ENCODE measurements at regions of chr11 and their contacts with region 1.

Region 1: DNA sequence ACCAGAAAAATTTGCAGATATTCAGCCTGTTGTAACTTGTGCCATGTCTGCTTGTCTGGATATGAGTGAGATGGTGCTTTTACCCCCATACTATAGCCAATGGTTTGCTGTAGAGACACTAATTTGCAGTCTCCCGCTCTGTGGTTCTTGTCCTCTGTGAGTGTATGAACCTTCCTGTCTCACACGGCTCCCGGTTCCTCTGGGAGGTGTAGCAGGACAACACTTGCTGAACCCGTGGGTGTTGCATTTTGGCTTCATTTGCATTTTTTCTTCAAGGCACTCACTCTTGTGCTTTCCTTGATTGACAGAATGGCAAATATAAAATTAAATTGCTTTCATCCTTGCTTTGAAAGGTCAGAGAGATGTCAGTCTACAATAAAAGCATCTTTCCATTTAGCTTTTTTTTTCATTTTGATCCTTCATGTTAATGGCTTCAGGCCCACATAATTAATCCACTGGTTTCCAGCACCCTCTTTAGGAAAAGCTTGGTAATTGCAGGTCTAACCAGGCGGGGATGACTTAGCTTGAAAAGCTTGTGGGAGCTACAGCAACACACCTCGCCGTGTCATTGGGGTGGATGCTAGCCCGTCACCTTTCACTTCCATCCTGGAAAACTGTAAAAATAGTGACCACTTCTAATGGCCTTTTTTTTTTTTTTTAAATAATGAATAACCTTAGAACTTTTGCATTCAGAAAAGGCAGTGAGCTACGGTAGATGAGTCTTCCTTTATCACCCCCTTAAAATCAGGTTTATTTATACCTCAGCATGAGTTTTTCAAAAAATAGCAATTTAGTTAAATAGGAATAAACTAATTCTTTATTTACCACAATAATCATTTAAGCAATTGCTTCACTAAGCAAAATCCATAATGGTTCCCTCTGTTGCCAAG is 27.4 kb upstream of the ST14 start:
- DNase-seq: peak; percentile 65
- ATAC-seq: peak; percentile 67
- H3K4me3 Mint-ChIP-seq: no peak overlapping the region
- H3K27ac Mint-ChIP-seq: no peak overlapping the region
- H3K4me1 Mint-ChIP-seq: no peaks in the 10 kb centered on the region
- H3K27me3 Mint-ChIP-seq: no peaks in the 10 kb centered on the region

Region 2: DNA sequence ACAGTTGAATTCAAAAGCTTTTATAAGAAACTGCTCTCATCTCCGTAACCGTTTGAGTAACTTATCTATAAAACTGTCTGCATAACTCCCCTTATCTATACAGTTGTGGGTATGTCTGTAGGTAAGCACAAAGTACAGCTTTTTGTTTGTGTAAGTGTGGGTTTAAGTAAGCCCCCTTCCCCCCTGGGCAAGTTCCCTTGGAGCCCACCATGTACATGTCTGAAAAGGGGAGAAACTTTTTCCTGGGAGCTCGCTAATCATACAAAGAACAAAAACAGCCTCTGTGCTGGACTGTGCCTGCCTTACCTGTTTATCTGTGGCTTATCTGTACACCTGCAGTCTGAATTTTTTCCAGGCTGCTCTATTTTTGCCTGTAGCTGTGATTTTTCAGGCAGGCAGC is 352.9 kb before region 1 on chr11:
- CTCF ChIA-PET with region 1: interaction called, 11 read pairs
- POLR2A ChIA-PET with region 1: no interaction called
- DNase-seq: no peak
- ATAC-seq: no peak
- H3K4me3 Mint-ChIP-seq: no peak overlapping the region
- H3K27ac Mint-ChIP-seq: no peak overlapping the region
- H3K4me1 Mint-ChIP-seq: no peaks in the 10 kb centered on the region
- H3K27me3 Mint-ChIP-seq: peaks cover 12% of the 10 kb centered on the region

Region 3: DNA sequence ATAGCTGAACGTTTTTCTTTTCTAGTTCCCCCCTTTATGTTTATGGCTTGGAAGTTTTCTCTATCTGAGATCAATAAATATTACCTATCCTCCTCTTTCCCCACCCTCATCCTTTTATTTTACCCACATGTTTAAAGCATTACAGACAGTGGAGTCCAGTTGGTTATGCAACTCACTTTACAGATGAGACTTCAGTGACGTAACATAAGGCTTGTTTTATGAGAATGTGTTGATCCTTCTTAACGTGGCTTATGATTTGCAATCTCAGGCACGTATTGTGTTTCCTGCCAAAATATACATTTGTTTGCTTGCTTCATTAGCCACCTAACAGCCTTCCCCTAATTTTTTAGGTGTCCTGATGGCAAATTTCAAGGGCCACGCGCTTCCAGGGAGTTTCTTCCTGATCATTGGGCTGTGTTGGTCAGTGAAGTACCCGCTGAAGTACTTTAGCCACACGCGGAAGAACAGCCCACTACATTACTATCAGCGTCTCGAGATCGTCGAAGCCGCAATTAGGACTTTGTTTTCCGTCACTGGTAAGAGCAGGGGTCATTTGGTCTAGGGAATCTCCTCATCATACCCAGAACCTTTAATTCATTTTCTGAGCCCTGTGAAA is 280.0 kb before region 1 on chr11:
- CTCF ChIA-PET with region 1: no interaction called
- POLR2A ChIA-PET with region 1: no interaction called
- DNase-seq: no peak
- ATAC-seq: no peak
- H3K4me3 Mint-ChIP-seq: no peak overlapping the region
- H3K27ac Mint-ChIP-seq: peak overlapping the region; percentile 1
- H3K4me1 Mint-ChIP-seq: peaks cover 25% of the 10 kb centered on the region
- H3K27me3 Mint-ChIP-seq: peaks cover 2% of the 10 kb centered on the region

Region 4: DNA sequence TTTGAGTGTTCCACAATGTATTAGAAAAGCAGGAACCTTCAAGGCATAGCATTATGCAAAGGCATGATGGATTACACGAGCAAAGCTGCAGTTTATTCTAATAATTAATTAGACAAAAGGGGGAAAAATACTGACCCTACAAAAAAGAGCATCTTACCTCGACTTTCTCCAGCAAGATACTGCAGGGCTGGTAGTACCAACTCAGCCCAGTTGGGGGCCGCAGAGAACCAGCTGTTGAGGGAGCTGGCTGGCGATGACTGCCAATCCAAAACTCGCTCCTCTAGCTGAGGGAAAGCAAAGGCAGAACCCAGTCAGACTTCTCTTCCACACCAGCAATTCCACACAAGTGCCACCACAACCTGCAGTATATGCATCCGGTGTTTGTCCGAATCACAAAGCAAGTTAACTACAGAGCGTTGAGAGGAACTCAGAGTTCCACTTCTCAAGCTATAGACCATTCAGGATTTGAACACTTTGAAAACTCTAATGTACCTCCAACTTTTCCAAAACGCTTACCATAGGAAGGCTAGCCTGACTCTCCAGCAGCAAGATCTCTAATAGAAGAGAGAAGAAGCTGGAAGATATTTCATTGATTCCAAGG is 250.5 kb before region 1 on chr11:
- CTCF ChIA-PET with region 1: interaction called, 36 read pairs
- POLR2A ChIA-PET with region 1: no interaction called
- DNase-seq: peak; percentile 60
- ATAC-seq: peak; percentile 69
- H3K4me3 Mint-ChIP-seq: no peak overlapping the region
- H3K27ac Mint-ChIP-seq: no peak overlapping the region
- H3K4me1 Mint-ChIP-seq: no peaks in the 10 kb centered on the region
- H3K27me3 Mint-ChIP-seq: no peaks in the 10 kb centered on the region

Region 5: DNA sequence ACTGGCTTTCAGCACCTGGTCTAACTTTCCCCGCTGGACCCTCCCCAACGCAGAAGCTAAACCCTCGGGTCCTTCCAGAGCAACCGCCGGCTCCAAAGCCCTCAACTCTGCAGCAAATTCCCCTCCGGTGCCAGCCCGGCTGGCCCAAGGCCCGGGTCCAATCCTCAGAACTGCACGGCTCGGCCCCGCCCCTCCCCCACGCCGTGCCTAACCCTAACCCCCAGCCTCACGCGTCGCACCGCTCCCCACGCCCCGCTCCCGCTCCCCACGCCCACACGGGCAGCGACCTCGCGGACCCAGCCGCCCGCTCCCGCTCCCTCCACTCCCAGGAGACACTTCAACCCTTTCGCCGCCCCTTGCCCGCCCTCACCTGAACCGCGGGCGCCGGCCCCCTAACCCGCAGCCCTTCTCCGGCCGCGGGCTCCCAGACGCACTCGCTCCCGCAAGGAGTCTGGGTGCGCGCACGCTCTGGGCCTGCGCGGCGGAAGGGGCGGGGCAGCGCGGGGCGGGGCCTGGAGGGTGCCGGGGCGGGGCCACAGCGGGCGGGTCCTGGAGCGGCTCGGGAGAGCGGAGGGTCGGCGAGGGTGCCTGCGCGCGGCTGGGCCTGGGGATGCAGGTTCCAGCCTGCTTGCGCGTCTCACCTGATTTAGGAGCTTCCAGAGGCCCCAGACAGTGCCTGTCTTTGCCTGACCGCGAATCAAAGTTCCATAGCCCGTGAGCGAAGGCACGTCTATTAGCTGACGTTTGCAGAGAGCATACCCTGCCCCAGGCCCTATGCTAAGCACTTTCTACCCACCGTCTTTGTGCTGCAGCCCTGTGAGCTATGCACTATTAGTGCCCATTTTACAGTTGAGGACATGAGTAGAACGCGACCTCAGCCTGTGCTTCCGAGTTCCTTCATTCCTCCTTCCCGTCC is 236.8 kb before region 1 on chr11 and contains the start of gene NFRKB:
- CTCF ChIA-PET with region 1: interaction called, 14 read pairs
- POLR2A ChIA-PET with region 1: no interaction called
- DNase-seq: peak; percentile 88
- ATAC-seq: peak; percentile 97
- H3K4me3 Mint-ChIP-seq: peak within 1 kb of the TSS; percentile 90
- H3K27ac Mint-ChIP-seq: peak within 1 kb of the TSS; percentile 83
- H3K4me1 Mint-ChIP-seq: peaks cover 28% of the 10 kb centered on the region
- H3K27me3 Mint-ChIP-seq: peaks cover 7% of the 10 kb centered on the region
- total RNA-seq, gene NFRKB: 32.5 to 35.5 TPM

Region 6: DNA sequence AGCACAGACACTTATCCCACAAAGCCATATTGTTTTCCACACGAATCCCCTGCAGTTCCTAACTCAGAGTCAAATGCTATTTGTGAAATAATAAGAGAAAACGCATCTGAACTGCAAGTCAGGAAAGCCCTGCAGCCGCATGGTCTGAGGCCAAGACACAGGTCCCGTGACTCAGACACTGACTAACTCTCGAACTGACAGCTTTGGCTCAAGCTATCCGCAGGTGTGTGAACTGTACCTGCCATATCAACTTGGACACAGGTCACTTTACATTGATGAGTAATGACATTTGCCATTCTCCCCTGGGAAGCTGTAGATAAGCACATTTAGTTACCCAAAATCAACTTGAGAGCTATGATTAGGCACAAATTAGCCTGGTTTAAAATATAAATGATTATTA is 201.9 kb before region 1 on chr11:
- CTCF ChIA-PET with region 1: interaction called, 165 read pairs
- POLR2A ChIA-PET with region 1: no interaction called
- DNase-seq: no peak
- ATAC-seq: no peak
- H3K4me3 Mint-ChIP-seq: no peak overlapping the region
- H3K27ac Mint-ChIP-seq: no peak overlapping the region
- H3K4me1 Mint-ChIP-seq: no peaks in the 10 kb centered on the region
- H3K27me3 Mint-ChIP-seq: no peaks in the 10 kb centered on the region

Region 7: DNA sequence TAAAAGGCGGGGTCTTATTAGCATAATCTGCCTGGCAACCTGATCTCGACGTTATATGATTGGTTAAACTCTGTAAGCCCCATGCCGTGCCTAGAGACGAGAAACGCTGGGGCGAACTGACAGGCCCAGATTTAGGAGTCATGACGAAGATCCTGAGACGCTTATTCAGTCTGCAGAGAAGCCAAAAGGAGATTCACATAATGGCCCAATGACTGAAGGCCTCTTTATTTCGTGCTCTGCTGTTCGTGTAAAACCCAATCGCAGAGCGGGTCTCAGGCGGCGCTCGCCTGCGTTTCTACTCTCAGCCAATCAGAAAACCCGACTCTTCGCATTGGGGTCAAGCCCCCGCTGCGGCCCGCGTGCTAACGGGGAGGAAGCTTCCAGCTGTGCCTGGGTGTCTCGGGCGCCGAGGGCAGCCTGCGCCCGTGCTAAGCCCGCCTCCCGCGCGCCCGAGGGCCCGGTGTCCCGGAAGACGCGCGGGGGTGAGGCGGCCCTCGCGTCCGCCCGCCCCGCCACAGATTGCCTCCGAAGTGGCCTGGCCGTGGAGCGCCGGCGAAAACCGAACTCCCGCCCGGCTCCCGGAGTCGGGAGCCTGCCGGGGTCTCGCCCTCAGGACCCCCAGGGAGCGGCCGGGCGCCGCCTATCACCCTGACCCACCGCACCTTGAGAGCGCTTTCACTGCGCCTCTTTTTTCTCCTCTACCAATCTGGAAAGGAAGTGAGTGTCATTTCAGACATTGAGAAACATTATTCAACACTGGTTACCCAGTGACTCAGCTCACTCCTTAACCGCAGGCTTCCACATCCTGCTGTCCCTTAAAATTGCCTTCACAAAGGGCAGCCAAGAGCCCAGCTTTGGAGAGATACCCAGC is 129.1 kb before region 1 on chr11:
- CTCF ChIA-PET with region 1: interaction called, 15 read pairs
- POLR2A ChIA-PET with region 1: no interaction called
- DNase-seq: peak; percentile 94
- ATAC-seq: peak; percentile 80
- H3K4me3 Mint-ChIP-seq: peak overlapping the region; percentile 97
- H3K27ac Mint-ChIP-seq: peak overlapping the region; percentile 100
- H3K4me1 Mint-ChIP-seq: peaks cover 17% of the 10 kb centered on the region
- H3K27me3 Mint-ChIP-seq: peaks cover 5% of the 10 kb centered on the region

Region 8: DNA sequence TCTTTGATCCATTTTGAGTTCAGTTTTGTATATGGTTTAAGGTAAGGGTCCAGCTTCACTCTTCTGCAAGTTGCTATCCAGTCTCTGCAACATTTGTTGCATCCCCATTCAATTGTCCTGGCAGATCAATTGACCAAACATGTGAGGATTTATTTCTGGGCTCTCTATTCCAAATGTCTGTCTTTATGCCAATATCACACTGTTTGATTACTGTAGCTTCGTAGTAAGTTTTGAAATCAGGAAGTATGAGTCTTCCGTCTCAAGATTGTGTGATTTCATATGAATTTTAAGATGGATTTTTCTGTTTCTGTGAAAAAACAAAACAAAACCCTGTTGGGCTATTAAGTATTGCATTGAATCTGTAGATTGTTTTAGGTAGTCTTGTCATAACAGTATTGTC is 45.5 kb before region 1 on chr11:
- CTCF ChIA-PET with region 1: no interaction called
- POLR2A ChIA-PET with region 1: no interaction called
- DNase-seq: no peak
- ATAC-seq: no peak
- H3K4me3 Mint-ChIP-seq: no peak overlapping the region
- H3K27ac Mint-ChIP-seq: no peak overlapping the region
- H3K4me1 Mint-ChIP-seq: no peaks in the 10 kb centered on the region
- H3K27me3 Mint-ChIP-seq: peaks cover 4% of the 10 kb centered on the region

Region 9: DNA sequence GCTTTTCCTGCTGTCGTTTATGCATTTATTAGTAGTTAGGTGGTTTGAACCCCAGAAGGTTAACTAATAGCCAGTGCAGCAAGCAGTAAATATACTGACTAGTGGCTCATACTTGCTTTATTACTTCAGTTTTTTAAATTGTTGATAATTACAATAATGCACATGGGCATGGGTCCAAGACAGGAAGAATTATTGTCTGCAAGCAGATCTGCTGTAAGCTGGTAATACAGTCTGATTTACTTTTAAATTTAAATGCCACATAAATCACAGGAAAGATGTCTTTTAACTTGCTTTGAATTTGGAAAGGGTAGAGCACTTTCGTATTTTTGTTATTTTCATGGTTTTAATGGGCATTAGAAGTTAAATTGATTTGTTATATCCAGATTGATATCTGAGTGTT is 35.4 kb before region 1 on chr11:
- CTCF ChIA-PET with region 1: no interaction called
- POLR2A ChIA-PET with region 1: no interaction called
- DNase-seq: no peak
- ATAC-seq: no peak
- H3K4me3 Mint-ChIP-seq: no peak overlapping the region
- H3K27ac Mint-ChIP-seq: no peak overlapping the region
- H3K4me1 Mint-ChIP-seq: no peaks in the 10 kb centered on the region
- H3K27me3 Mint-ChIP-seq: no peaks in the 10 kb centered on the region

Region 10: DNA sequence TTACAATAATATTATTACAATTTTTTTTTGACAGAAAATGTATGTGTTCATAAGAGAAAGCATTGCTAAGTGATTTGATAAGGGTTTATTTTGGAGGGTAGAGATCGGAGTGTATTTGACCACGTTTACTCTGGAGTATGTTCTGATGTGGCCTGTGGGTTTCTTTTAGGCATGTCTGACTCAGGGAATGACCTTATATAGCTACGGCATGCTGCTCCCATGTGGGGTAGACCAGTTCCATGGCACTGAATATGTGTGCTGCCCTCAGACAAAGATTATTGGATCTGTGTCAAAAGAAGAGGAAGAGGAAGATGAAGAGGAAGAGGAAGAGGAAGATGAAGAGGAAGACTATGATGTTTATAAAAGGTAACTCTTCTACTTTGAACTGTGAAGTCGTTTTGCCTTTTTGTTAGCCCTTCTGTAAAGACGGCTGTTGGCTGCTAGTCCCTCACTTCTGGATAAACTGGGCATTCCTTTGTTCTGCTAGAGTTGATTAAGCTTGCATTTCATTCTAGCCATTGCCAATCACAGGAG is 10.7 kb before region 1 on chr11:
- CTCF ChIA-PET with region 1: interaction called, 16 read pairs
- POLR2A ChIA-PET with region 1: no interaction called
- DNase-seq: peak; percentile 39
- ATAC-seq: peak; percentile 58
- H3K4me3 Mint-ChIP-seq: no peak overlapping the region
- H3K27ac Mint-ChIP-seq: no peak overlapping the region
- H3K4me1 Mint-ChIP-seq: peaks cover 41% of the 10 kb centered on the region
- H3K27me3 Mint-ChIP-seq: peaks cover 26% of the 10 kb centered on the region

Region 11: GRCh38 chr11:130181295-130182272 is 49.4 kb after region 1 on chr11:
- CTCF ChIA-PET with region 1: no interaction called
- POLR2A ChIA-PET with region 1: no interaction called
- DNase-seq: no peak
- ATAC-seq: no peak
- H3K4me3 Mint-ChIP-seq: no peak overlapping the region
- H3K27ac Mint-ChIP-seq: no peak overlapping the region
- H3K4me1 Mint-ChIP-seq: no peaks in the 10 kb centered on the region
- H3K27me3 Mint-ChIP-seq: peaks cover 6% of the 10 kb centered on the region